ENCODE measurements at regions of chr22 and their contacts with region 1.

Region 1: GRCh38 chr22:32660292-32660691 is 141.2 kb upstream of the TIMP3 start:
- DNase-seq: no peak

Region 2: GRCh38 chr22:33000342-33001280 is 340.3 kb after region 1 on chr22:
- intact Hi-C with region 1: loop called (anchors 2 kb)
- DNase-seq: peak; percentile 76